ENCODE measurements at regions of chr1 and their contacts with region 1.

Region 1: GRCh38 chr1:226121587-226122400 is 59.3 kb downstream of the H3-3A start:
- DNase-seq: no peak
- H3K4me3 ChIP-seq: peak overlapping the region; percentile 43 to 77 (median 71)
- H3K27ac ChIP-seq: peak overlapping the region; percentile 62 to 74 (median 69)
- H3K4me1 ChIP-seq: peaks cover 0 to 19% (median 12%) of the 10 kb centered on the region in 4 donors
- H3K27me3 ChIP-seq: no peaks in the 10 kb centered on the region
- CTCF ChIP-seq: peak; percentile 29 to 77 (median 59)
- EP300 ChIP-seq: no peak
- POLR2A ChIP-seq: no peak

Region 2: DNA sequence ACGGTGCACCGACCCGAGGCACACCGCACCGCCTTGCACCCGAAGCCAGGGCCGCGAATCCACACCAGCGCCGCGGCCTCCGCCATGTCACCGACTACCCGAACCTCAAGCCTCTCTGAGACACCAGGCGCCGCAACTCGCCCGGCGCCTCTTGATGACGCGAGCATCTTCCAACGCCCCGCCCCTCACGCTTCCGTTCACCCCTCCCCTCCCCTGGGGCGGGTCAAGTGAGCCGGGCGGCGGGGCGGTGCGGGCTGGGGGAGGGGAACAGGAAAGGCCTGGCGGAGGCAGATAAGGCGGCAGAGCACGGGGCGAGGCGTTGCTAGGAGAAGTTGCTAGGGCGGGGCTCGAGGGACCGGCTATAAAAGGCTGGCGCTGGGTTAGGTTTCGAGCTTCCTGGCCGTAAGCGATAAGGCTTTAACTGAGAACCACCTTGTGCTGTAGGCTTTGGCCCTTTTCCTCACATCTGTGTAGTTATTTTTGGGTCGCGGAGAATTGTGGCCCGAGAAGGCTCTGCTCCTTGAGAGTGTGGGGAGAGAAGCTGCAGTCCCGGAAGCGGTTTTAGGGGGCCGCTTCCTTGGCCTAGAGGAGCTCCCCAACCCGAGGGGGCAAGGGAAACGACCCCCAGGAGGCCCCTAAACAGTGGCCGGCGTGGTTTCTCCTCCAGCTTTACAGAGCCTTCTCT is 122.4 kb before region 1 on chr1 and contains the start of gene SDE2:
- intact Hi-C with region 1: loop called (anchors 5 kb)
- DNase-seq: peak; percentile 100
- H3K4me3 ChIP-seq: peak within 1 kb of the TSS; percentile 56 to 90 (median 81)
- H3K27ac ChIP-seq: peak within 1 kb of the TSS; percentile 95 to 98 (median 97)
- H3K4me1 ChIP-seq: peaks cover 0 to 36% (median 26%) of the 10 kb centered on the region in 4 donors
- H3K27me3 ChIP-seq: no peaks in the 10 kb centered on the region
- CTCF ChIP-seq: peak in 1 of 4 experiments; percentile 20
- EP300 ChIP-seq: peak in 2 of 4 donors; percentile 68 to 84
- POLR2A ChIP-seq: peak; percentile 81 to 87
- total RNA-seq, gene SDE2: 11.1 to 21.9 (median 18.4) TPM

Region 3: DNA sequence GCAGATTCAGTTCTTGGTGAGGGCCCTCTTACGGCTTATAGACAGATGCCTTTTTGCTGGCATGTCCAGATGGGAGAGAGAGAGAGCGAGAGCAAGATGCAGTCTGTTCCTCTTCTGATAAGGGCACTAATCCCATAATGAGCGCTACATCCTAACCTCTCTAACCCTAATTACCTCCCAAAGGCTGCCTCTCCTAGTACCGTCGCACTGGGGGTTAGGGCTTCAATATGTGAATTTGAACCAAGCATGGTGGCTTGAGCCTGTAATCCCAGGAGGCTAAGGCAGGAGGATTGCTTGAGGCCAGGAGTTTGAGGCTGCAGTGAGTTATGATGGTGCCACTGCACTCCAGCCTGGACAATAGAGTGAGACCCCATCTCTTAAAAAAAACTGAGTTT is 112.1 kb before region 1 on chr1:
- intact Hi-C with region 1: no loop called
- DNase-seq: no peak
- H3K4me3 ChIP-seq: no peak overlapping the region
- H3K27ac ChIP-seq: no peak overlapping the region
- H3K4me1 ChIP-seq: no peaks in the 10 kb centered on the region
- H3K27me3 ChIP-seq: no peaks in the 10 kb centered on the region
- CTCF ChIP-seq: no peak
- EP300 ChIP-seq: no peak
- POLR2A ChIP-seq: no peak

Region 4: DNA sequence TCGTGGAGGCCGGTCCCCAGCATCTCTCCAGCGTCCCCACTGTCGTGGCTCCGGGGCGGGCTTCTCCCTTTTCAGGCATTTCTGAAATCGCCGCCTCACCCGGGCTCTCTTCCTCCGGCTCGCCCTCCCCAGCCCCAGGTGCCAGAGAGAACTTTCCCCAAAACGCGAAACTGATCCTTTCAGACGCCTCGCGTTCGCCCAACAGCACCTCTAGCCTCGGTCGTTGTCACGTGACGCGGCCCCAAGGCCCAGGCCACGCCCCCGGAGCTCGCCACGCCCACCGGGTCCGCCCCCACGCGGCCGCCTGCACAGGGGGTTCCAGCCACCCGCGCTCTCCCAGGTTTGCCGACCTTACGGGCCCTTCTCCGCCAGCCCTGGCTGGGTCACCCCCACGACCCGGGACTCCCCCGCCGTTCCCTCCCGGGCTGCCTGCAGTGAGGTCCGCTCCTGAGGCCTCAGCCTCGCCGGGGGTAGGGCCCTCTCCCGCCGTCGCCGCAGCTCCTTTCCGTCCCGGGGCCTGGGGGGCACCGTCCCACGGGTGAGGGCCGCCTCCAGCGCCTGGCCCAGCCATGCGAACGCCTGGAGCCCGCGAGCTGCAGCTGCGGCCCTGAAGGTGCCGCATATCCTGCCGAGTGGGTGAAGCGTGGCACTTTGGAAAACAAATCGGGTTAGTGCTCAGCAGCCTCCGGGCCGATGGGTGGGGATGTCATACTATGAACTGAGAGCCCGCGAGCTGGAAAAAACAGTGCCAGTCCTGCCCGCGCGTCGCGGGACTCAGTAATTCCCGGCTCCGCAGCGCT is 38.3 kb before region 1 on chr1:
- intact Hi-C with region 1: loop called (anchors 5 kb)
- DNase-seq: peak; percentile 94
- H3K4me3 ChIP-seq: peak overlapping the region; percentile 40 to 76 (median 58)
- H3K27ac ChIP-seq: peak overlapping the region; percentile 75 to 84 (median 77)
- H3K4me1 ChIP-seq: peaks cover 0 to 13% (median 12%) of the 10 kb centered on the region in 4 donors
- H3K27me3 ChIP-seq: no peaks in the 10 kb centered on the region
- CTCF ChIP-seq: no peak
- EP300 ChIP-seq: no peak
- POLR2A ChIP-seq: peak in 1 of 2 donors; percentile 20

Region 5: DNA sequence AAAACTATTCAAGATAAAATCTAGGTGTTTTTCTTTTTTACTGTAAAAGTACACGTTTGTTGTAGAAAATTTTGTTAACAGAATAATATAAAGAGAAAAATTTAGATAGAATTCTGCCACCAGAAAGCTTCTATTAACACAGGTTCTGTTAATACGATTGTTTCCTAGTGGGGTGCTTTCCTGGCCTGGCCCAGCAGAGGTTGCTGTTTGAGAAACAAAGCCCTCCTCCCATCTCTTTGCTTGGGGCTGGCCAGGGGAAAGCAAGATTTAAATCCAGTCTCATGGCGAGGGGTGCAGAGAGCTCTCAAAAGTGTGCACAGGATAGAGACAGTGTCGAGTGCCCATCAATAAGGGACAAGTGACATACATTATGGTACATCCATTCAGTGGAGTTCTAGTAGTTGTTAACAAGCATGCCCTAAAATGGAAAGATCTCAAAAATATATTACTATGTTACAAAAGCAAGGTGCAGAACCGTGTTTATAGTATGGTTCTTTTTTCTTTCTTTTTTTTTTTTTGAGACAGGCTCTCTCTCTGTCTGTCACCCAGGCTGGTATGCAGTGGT is 79.3 kb after region 1 on chr1:
- intact Hi-C with region 1: loop called (anchors 1 kb)
- DNase-seq: no peak
- H3K4me3 ChIP-seq: no peak overlapping the region
- H3K27ac ChIP-seq: no peak overlapping the region
- H3K4me1 ChIP-seq: no peaks in the 10 kb centered on the region
- H3K27me3 ChIP-seq: no peaks in the 10 kb centered on the region
- CTCF ChIP-seq: no peak
- EP300 ChIP-seq: no peak
- POLR2A ChIP-seq: no peak

Measured in sigmoid colon (tissue), 7 donors.